ENCODE measurements at regions of chr2 and their contacts with region 1.

Region 1: DNA sequence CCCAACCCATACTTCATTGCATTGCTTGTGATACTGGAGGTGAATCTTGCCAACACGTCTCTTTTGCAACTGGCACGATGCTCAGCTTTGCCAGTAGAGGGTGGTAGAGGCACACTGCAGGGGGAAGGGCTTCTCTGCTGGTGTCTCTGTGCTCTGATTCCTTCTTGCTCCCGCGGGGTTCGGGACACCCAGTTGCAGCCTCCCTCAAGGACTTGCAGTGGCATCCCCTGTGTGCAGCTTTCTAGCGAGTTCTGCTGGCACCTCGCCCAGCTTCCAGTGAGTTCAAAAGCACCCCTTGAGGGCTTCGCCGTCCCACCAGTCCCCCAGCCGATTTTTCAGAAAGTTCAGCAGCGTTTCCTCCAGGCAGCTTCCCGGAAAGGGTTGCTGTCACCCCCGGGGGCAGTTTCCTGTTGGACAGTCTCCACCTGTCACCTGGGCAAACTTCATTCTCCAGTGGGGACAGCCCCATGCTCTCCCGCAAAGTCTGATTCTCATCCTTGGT is 35.3 kb upstream of the EN1 start:
- DNase-seq: peak; percentile 75 to 83 (median 82)
- H3K4me3 ChIP-seq: peak overlapping the region; percentile 5 to 68 (median 32)
- H3K4me3 Mint-ChIP-seq: peak overlapping the region; percentile 75 to 93
- H3K27ac ChIP-seq: no peak overlapping the region
- H3K27ac Mint-ChIP-seq: peak overlapping the region in 4 of 7 donors; percentile 35 to 82 (median 71)
- H3K4me1 ChIP-seq: peaks cover 16 to 20% of the 10 kb centered on the region in 2 donors
- H3K4me1 Mint-ChIP-seq: peaks cover 31% of the 10 kb centered on the region
- H3K27me3 ChIP-seq: peaks cover 4 to 8% of the 10 kb centered on the region in 2 donors
- H3K27me3 Mint-ChIP-seq: peaks cover 3 to 11% (median 11%) of the 10 kb centered on the region in 3 donors
- CTCF ChIP-seq: peak; percentile 93

Region 2: GRCh38 chr2:118989481-118989880 is 106.7 kb after region 1 on chr2:
- intact Hi-C with region 1: loop called in 1 of 2 experiments (anchors 10 kb)
- DNase-seq: peak in 1 of 3 donors; percentile 52
- H3K4me3 ChIP-seq: no peak overlapping the region
- H3K4me3 Mint-ChIP-seq: no peak overlapping the region
- H3K27ac ChIP-seq: no peak overlapping the region
- H3K27ac Mint-ChIP-seq: peak overlapping the region in 1 of 7 donors; percentile 13
- H3K4me1 ChIP-seq: peaks cover 38 to 44% of the 10 kb centered on the region in 2 donors
- H3K4me1 Mint-ChIP-seq: peaks cover 58% of the 10 kb centered on the region
- H3K27me3 ChIP-seq: no peaks in the 10 kb centered on the region
- H3K27me3 Mint-ChIP-seq: peaks cover 5 to 17% (median 10%) of the 10 kb centered on the region in 3 donors
- CTCF ChIP-seq: no peak

Region 3: DNA sequence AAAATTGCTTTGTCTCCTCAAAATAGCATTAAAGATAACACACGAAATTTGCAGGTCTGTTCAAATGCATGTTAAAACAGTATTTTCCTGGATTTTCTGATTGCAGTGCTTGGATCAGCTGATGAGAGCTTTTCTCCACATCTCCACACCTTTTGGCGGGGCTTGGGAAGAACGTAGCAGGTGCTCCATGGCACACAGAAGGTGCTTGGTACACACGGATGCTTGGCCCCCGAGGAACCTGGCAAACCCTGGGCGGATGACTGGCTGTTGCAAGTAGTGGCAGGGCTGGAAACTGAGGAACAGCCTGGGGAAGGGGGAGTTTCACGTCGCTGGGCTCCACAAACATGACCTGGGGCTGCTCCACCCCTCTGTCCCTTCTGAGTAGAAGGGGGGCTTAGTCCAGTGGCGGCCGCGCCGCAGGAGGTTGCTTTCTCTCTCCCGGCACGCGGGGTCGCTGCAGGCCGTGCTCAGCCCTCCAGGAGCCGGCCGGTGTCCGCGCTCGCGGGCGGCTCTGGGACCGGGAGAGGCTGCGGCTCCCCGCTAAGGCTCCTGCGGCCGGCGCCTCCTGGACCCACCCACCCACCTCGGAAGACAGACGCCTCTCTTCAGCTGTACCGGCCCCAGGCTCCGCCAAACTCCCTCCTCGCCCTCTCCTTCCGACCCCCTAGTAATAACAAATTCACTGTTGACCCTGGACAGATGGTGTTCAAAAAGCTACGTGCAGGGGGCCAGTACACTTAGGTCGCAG is 128.6 kb after region 1 on chr2:
- intact Hi-C with region 1: loop called (anchors 5 kb)
- DNase-seq: peak in 2 of 3 donors; percentile 36 to 55
- H3K4me3 ChIP-seq: no peak overlapping the region
- H3K4me3 Mint-ChIP-seq: peak overlapping the region in 1 of 2 donors; percentile 75
- H3K27ac ChIP-seq: no peak overlapping the region
- H3K27ac Mint-ChIP-seq: peak overlapping the region in 1 of 7 donors; percentile 67
- H3K4me1 ChIP-seq: peaks cover 16 to 24% of the 10 kb centered on the region in 2 donors
- H3K4me1 Mint-ChIP-seq: peaks cover 34% of the 10 kb centered on the region
- H3K27me3 ChIP-seq: peaks cover 8 to 34% of the 10 kb centered on the region in 2 donors
- H3K27me3 Mint-ChIP-seq: peaks cover 28 to 47% (median 45%) of the 10 kb centered on the region in 3 donors
- CTCF ChIP-seq: peak; percentile 76

Region 4: DNA sequence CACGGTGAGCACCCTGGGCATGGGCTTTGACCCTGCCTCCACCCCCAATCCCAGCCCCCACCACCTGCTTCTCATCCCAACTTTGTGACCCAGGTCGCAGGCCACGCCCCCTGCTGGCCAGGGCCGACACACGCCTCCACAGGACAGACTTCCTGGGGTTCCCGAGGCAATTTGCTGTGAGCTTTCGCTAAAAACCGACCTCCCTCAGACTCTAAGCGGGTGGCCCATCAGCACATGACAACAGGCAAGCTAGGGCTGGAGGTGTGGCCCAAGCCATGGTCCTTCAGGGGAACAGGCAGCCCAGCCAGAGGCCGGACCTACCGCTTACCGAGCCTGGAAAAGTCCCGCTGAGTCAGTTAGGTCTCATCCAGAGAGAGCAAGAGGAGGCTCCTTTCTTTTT is 243.9 kb after region 1 on chr2:
- intact Hi-C with region 1: loop called (anchors 2 to 5 kb)
- DNase-seq: peak; percentile 14 to 45 (median 32)
- H3K4me3 ChIP-seq: no peak overlapping the region
- H3K4me3 Mint-ChIP-seq: peak overlapping the region in 1 of 2 donors; percentile 67
- H3K27ac ChIP-seq: no peak overlapping the region
- H3K27ac Mint-ChIP-seq: no peak overlapping the region
- H3K4me1 ChIP-seq: no peaks in the 10 kb centered on the region
- H3K4me1 Mint-ChIP-seq: peaks cover 3% of the 10 kb centered on the region
- H3K27me3 ChIP-seq: peaks cover 0 to 6% of the 10 kb centered on the region in 2 donors
- H3K27me3 Mint-ChIP-seq: peaks cover 29 to 51% (median 31%) of the 10 kb centered on the region in 3 donors
- CTCF ChIP-seq: peak; percentile 83

Region 5: DNA sequence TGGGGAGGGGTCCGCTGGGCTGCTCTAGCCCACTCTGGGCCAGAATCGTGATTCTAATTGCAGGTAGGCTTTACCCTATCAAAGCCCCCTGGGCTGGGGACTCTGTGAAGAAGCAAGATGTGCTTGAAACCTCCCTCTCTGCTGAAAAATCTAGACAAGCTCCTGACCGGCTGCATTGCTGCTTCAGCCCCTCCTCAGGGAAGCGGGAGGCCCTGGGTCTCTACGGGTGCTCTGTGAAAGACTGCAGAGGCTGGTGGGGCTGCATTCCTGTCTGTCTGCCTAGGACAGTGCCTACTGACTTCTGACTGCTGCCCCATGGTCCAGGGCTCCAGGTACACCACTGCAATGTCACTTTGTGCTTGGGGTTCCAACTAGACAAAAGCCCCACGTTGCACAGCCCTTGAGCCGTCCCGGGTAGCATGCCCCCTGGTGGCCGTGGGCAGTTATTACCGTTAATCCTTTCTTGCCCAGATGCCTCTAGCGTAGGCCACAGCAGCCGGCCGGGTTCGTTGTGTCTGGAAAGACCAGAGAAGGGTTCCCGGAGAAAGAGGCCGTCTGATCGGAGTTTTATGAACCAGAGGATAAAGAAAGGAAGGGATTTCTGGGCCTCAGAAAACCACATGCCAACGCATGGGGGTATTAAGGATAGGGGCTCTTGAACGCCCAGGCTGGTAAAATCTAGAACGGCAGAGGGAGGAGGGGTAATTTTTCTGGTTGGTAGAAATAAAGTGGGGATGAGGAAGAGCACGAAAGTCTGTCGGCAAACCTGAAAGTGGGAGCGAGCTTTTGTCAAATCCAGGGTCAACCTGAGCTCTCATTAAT is 291.7 kb after region 1 on chr2:
- intact Hi-C with region 1: loop called (anchors 2 to 5 kb)
- DNase-seq: peak; percentile 27 to 54 (median 44)
- H3K4me3 ChIP-seq: no peak overlapping the region
- H3K4me3 Mint-ChIP-seq: no peak overlapping the region
- H3K27ac ChIP-seq: no peak overlapping the region
- H3K27ac Mint-ChIP-seq: no peak overlapping the region
- H3K4me1 ChIP-seq: no peaks in the 10 kb centered on the region
- H3K4me1 Mint-ChIP-seq: no peaks in the 10 kb centered on the region
- H3K27me3 ChIP-seq: no peaks in the 10 kb centered on the region
- H3K27me3 Mint-ChIP-seq: peaks cover 1 to 8% (median 6%) of the 10 kb centered on the region in 3 donors
- CTCF ChIP-seq: peak; percentile 93

Region 6: GRCh38 chr2:119283860-119284331 is 401.1 kb after region 1 on chr2:
- intact Hi-C with region 1: loop called in 1 of 2 experiments (anchors 10 kb)
- DNase-seq: peak; percentile 92 to 98 (median 94)
- H3K4me3 ChIP-seq: peak overlapping the region in 1 of 3 experiments; percentile 57
- H3K4me3 Mint-ChIP-seq: peak overlapping the region; percentile 60 to 77
- H3K27ac ChIP-seq: peak overlapping the region; percentile 54 to 81
- H3K27ac Mint-ChIP-seq: peak overlapping the region; percentile 75 to 91 (median 91)
- H3K4me1 ChIP-seq: peaks cover 39 to 41% of the 10 kb centered on the region in 2 donors
- H3K4me1 Mint-ChIP-seq: peaks cover 42% of the 10 kb centered on the region
- H3K27me3 ChIP-seq: no peaks in the 10 kb centered on the region
- H3K27me3 Mint-ChIP-seq: peaks cover 0 to 2% (median 1%) of the 10 kb centered on the region in 3 donors
- CTCF ChIP-seq: no peak

Region 7: GRCh38 chr2:119290859-119291587 is 408.3 kb after region 1 on chr2:
- intact Hi-C with region 1: loop called (anchors 5 to 10 kb)
- DNase-seq: peak in 2 of 3 donors; percentile 56 to 68
- H3K4me3 ChIP-seq: no peak overlapping the region
- H3K4me3 Mint-ChIP-seq: no peak overlapping the region
- H3K27ac ChIP-seq: no peak overlapping the region
- H3K27ac Mint-ChIP-seq: no peak overlapping the region
- H3K4me1 ChIP-seq: no peaks in the 10 kb centered on the region
- H3K4me1 Mint-ChIP-seq: peaks cover 3% of the 10 kb centered on the region
- H3K27me3 ChIP-seq: no peaks in the 10 kb centered on the region
- H3K27me3 Mint-ChIP-seq: peaks cover 0 to 4% (median 1%) of the 10 kb centered on the region in 3 donors
- CTCF ChIP-seq: peak; percentile 77

Measured in CD14-positive monocyte (primary cell).